ENCODE measurements at regions of chr11 and their contacts with region 1.

Region 1: GRCh38 chr11:31509429-31510345 is at the starts of genes ELP4 and IMMP1L:
- DNase-seq: peak; percentile 93 to 98
- ATAC-seq: peak; percentile 96 to 100 (median 98)
- H3K4me3 ChIP-seq: peak within 1 kb of the TSS; percentile 79
- H3K4me3 Mint-ChIP-seq: peak within 1 kb of the TSS; percentile 99
- H3K27ac ChIP-seq: peak within 1 kb of the TSS; percentile 93
- H3K27ac Mint-ChIP-seq: peak within 1 kb of the TSS; percentile 95 to 98
- H3K4me1 ChIP-seq: no peaks in the 10 kb centered on the region
- H3K4me1 Mint-ChIP-seq: peaks cover 41 to 47% of the 10 kb centered on the region in 2 donors
- H3K27me3 ChIP-seq: no peaks in the 10 kb centered on the region
- H3K27me3 Mint-ChIP-seq: no peaks in the 10 kb centered on the region
- CTCF ChIP-seq: no peak
- total RNA-seq, gene ELP4: 22.8 to 29.6 (median 23.4) TPM
- total RNA-seq, gene IMMP1L: 12.0 to 17.3 (median 15.7) TPM

Region 2: DNA sequence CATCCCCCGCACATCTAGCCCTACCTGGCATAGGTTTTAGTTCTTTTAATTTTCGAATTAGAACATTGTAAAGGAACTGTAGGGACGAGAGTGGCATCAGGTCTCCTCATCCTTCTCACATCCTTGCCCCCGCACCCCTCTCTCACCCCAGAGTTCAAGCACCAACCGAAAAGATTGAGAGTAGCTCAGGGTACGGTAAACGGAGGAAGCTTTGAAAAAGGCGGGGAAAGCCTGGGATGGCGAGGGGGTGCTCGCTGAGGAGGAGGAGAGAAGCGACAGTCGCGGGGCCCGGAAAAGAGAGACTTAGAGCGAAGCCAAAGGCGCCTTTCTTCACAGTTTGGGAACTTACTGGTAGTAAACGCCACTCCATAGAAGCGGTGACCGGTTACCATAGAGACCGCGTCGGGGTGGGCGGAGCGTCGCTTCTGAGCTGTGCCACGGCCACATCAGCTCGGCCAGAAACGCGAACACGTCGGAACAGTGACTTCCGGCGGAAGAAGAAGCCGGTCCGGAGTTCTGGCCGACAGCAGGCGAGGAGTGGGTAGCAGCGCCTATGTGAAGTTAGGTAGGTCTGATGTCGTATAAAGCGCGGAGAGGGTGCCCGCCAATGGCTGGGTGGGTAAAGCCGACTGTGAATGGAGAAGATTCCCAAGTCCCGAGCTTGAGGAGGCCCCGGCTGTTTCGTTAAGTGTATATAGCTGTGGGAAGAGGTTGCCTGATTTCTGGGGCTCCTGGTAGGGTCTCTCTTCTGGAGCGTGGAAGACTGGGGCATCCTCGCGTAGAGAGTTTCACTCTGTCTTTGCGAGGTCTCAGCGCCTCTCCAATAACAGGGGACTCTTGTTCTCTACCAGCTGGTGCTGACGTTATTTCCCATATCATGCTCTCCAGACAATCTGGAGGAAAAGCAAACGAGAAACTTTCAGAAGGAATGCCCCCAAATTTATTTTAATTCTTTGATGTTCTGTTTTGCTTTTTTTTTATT is 140.0 kb before region 1 on chr11 and contains the starts of genes DCDC1 and DNAJC24:
- intact Hi-C with region 1: loop called (anchors 2 kb)
- DNase-seq: peak; percentile 90 to 97
- ATAC-seq: peak; percentile 98 to 99 (median 99)
- H3K4me3 ChIP-seq: peak within 1 kb of the TSS; percentile 90
- H3K4me3 Mint-ChIP-seq: peak within 1 kb of the TSS; percentile 100
- H3K27ac ChIP-seq: peak within 1 kb of the TSS; percentile 82
- H3K27ac Mint-ChIP-seq: peak within 1 kb of the TSS; percentile 95 to 97
- H3K4me1 ChIP-seq: peaks cover 13% of the 10 kb centered on the region
- H3K4me1 Mint-ChIP-seq: peaks cover 26 to 43% of the 10 kb centered on the region in 2 donors
- H3K27me3 ChIP-seq: peaks cover 10% of the 10 kb centered on the region
- H3K27me3 Mint-ChIP-seq: peaks cover 19 to 30% of the 10 kb centered on the region in 2 donors
- CTCF ChIP-seq: no peak
- total RNA-seq, gene DCDC1: not detected
- total RNA-seq, gene DNAJC24: 14.9 to 22.7 (median 18.6) TPM

Region 3: DNA sequence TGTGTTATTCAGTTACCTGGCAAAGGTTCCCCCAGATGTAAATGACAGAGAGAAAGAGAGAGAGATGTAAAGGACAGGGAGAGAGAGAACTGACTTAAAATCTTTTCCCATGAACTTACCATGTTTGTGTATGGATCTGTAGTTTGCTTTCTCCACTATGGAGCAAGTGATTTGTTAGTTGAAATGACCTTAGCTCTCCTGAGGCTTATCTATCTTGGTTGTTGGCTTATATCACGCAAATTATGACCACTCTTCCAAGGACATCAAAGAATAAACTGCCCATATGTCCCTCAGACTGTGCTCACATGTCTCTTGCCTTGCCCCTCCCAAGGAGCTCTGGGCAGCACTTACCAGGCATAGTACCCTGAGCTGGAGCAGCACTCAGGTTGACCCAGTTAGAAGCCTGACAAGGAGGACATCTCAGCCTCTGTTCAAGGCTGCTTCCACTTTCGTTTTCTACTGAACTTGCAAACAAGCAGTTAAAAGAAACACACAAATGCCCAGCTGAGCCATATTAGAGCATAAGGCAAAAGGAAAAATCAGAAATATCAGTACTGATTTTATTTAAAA is 485.9 kb after region 1 on chr11:
- intact Hi-C with region 1: loop called (anchors 5 kb)
- DNase-seq: peak in 1 of 2 donors; percentile 40
- ATAC-seq: peak; percentile 79 to 86 (median 80)
- H3K4me3 ChIP-seq: no peak overlapping the region
- H3K4me3 Mint-ChIP-seq: peak overlapping the region; percentile 88
- H3K27ac ChIP-seq: peak overlapping the region; percentile 70
- H3K27ac Mint-ChIP-seq: peak overlapping the region; percentile 86 to 87
- H3K4me1 ChIP-seq: peaks cover 13% of the 10 kb centered on the region
- H3K4me1 Mint-ChIP-seq: peaks cover 20% of the 10 kb centered on the region in 2 donors
- H3K27me3 ChIP-seq: no peaks in the 10 kb centered on the region
- H3K27me3 Mint-ChIP-seq: peaks cover 8 to 14% of the 10 kb centered on the region in 2 donors
- CTCF ChIP-seq: no peak

Region 4: GRCh38 chr11:32090545-32091373 is 581.1 kb after region 1 on chr11 and contains the start of gene RCN1:
- intact Hi-C with region 1: loop called (anchors 10 kb)
- DNase-seq: peak; percentile 45 to 50
- ATAC-seq: peak; percentile 65 to 67 (median 66)
- H3K4me3 ChIP-seq: peak within 1 kb of the TSS; percentile 66
- H3K4me3 Mint-ChIP-seq: peak within 1 kb of the TSS; percentile 89
- H3K27ac ChIP-seq: peak within 1 kb of the TSS; percentile 80
- H3K27ac Mint-ChIP-seq: peak within 1 kb of the TSS; percentile 65 to 85
- H3K4me1 ChIP-seq: peaks cover 25% of the 10 kb centered on the region
- H3K4me1 Mint-ChIP-seq: peaks cover 14 to 31% of the 10 kb centered on the region in 2 donors
- H3K27me3 ChIP-seq: no peaks in the 10 kb centered on the region
- H3K27me3 Mint-ChIP-seq: peaks cover 11 to 16% of the 10 kb centered on the region in 2 donors
- CTCF ChIP-seq: no peak
- total RNA-seq, gene RCN1: 19.1 to 21.2 (median 20.3) TPM

Region 5: DNA sequence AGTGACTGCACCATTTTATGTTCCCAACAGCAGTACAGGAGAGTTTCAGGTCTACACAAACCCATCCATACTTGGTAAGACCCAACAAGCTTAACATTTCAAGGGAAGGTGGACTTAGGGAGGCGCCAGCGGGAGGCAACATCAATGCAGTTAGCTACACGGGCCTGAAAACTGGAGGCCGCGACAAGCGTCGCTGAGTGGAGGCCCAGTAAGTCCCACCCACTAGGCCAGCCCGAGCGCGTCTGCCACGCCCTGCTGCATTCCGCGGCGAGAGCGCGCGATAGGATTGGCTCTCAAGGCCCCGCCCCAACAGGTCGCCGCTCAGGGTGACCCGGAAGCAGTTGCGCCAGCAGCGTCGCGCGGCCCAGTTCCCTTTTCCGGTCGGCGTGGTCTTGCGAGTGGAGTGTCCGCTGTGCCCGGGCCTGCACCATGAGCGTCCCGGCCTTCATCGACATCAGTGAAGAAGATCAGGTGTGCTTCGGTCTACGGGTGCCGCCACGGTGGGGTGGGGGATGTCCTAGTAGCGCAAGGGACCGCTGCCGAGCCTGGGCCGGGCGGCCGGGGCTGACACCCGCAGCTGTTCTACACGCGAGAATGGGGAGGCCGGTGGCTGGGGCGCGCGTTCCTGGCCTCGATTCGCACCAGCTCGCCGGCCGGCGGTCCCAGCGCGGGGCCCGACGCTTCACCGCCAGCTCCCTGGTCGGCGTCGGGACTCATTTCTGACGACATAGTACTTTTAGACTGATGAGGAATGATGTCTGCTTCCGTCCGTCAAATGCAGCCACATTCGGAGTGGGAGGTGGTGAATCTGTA is 1074.0 kb after region 1 on chr11 and contains the start of gene EIF3M:
- intact Hi-C with region 1: loop called (anchors 5 kb)
- DNase-seq: peak; percentile 93 to 98
- ATAC-seq: peak; percentile 98 to 99 (median 98)
- H3K4me3 ChIP-seq: peak within 1 kb of the TSS; percentile 89
- H3K4me3 Mint-ChIP-seq: peak within 1 kb of the TSS; percentile 98
- H3K27ac ChIP-seq: peak within 1 kb of the TSS; percentile 75
- H3K27ac Mint-ChIP-seq: peak within 1 kb of the TSS; percentile 94 to 98
- H3K4me1 ChIP-seq: peaks cover 12% of the 10 kb centered on the region
- H3K4me1 Mint-ChIP-seq: peaks cover 33 to 45% of the 10 kb centered on the region in 2 donors
- H3K27me3 ChIP-seq: no peaks in the 10 kb centered on the region
- H3K27me3 Mint-ChIP-seq: no peaks in the 10 kb centered on the region
- CTCF ChIP-seq: no peak
- total RNA-seq, gene EIF3M: 146 to 165 (median 155) TPM